GM13977 (cell line): ENCODE measurements at regions of chr5 and their contacts with region 1.

Region 1: DNA sequence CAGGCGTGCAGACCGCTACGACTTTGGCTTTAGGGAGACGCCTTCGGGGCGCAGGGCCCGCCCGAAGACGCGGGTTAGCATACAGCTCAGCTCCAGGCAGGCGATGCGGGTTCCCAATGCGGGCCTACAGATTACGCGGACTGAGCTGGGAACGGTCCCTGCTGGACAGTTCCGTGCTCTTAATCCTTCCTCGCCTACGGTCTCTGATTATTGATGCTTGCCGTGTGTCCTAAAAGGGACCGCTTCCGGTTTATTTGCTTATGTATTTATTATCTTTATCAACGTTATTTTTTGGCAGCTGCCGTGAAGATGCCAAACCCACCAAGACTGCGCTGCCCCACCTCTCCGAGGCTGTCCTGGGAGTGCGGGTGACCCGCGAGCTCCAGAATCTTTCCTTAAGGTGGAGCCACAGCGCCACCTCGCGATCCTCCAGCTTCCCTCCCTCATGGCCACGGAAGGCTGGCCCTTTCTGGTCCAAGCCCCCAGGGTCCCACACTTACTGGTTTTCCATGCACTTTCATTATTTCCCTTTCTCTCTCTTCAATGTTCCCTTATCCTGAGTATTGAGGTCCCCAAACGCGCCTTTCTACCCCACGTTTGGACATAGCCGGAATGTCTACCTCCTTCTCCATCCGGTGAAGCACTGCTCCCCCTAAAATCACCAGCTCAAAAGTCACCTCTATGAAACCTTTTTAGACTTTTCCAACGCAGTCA is 7.0 kb upstream of the EBF1 start:
- DNase-seq: peak; percentile 81
- CTCF ChIP-seq: peak; percentile 94

Region 2: GRCh38 chr5:158691631-158692255 is 415.0 kb before region 1 on chr5:
- in situ Hi-C with region 1: loop called (anchors 5 kb)
- DNase-seq: no peak
- CTCF ChIP-seq: no peak

Region 3: DNA sequence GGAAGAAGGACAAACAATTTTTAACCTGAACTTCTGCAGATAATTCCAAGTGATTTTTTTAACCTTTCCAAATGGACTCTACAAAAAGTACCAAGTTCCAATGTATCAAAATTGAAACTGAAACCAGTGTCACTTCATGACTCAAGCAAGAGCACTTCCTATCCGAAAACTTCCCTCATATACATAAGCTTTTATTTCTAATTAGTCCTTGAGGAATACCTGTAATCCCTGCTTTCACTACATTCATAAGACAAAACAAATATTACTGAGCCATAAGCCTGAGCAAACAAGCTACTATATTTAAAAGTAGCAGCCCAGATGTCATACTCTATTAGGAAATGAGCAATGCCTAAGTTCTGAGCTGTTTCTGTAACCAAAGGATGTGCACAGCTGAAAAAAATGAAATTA is 231.4 kb before region 1 on chr5:
- in situ Hi-C with region 1: no loop called
- DNase-seq: peak; percentile 9
- CTCF ChIP-seq: no peak